ENCODE measurements at regions of chr14 and their contacts with region 1.

Region 1: DNA sequence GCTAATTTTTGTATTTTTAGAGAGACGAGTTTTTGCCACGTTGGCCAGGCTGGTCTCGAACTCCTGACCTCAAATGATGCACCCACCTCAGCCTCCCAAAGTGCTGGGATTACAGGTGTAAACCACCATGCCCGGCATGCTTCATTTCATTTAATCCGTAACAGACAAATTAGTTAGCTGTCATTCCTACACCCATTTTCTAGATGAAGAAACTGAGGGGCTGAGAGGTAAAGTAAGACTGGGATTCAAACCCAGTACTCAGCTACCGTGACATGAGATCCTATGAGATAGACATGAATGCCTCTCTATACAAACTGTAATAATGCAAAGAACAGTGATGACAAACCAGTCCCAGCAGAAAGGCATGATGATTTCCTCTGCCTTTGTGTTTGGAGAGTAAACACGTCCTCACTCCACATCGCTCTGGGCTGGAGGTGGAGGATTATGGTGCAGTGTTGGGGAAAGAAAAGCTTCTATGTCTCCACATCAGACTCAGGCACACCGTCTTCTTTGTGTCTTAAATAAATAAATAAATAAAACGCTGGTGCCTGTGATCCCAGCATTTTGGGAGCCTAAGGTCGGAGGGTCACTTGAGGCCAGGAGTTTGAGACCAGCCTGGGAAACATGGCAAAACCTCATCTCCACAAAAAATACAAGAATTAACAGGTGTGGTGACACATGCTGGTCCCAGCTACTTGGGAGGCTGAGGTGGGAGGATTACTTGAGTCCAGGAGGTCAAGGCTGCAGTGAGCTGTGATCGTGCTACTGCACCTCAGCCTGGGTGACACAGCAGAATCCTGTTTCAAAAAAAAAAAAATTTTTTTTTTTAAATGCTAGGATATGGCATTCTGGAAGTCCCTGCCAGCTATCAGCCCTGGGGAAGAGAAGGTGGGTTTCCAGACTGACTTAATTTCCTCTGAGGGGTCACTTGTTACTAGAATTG is 10.5 kb downstream of the VSX2 start:
- DNase-seq: no peak
- ATAC-seq: no peak

Region 2: DNA sequence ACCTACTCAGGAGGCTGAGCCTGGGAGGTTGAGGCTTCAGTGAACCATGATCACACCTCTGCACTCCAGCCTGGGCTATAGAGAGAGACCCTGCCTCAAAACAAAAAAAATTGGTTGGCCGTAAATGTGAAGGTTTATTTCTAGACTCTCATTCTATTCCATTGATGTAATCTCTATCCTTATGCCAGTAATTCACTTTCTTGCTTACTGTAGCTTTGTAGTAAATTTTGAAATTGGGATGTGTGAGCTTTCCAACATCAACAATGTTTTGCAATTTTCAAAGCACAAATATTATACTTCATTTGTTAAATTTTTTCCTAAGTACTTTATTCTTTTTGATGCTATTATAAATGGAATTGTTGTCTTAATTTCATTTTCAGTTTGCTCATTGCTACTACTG is 140.3 kb before region 1 on chr14:
- intact Hi-C with region 1: loop called (anchors 2 to 5 kb)
- DNase-seq: no peak
- ATAC-seq: no peak

Region 3: DNA sequence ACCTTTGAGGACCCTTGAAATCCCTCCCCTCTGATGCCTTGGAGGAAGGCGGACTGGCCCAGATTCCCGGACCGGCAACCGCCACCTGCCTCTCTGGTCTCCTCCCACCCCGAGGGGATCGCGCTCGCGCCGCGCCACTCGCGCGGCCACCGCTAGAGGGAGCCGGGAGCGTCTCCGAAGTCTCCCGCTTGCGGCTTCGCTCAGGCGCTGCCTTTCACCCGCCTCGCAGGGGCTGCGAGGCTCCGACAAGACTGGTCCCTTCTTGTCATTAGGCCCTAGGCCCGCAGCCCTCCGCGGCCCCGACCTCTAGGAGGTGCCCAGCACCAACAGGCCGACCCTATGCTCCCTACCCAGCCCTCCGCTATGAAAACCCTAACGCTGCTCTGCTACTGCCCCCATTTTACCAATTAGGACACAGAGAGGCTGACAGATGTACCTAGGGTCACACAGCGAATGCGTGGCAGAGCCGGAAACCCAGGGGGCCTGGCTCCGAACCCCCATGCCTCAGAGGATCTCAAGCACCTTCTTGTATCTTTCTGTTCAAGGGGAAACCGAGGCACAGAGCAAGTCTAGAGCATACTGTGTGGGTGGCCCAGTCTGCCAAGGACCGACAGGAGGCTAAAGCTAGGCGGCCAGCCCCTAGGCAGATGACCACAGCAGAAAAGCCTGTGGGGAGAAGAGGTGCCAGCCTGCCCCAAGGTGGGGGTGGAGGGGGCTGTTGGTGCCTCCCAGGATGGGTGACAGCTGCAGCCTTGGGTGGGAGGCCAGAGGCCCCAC is 31.8 kb before region 1 on chr14:
- intact Hi-C with region 1: loop called in 1 of 2 experiments (anchors 5 kb)
- DNase-seq: peak; percentile 75
- ATAC-seq: peak; percentile 76 to 91